IMR-90 (cell line): ENCODE measurements at regions of chr3 and their contacts with region 1.

Region 1: GRCh38 chr3:55897573-55898224 is 410.6 kb upstream of the WNT5A start:
- DNase-seq: peak; percentile 21
- ATAC-seq: peak; percentile 52; the same call in 1 of the 2 replicates
- H3K4me3 ChIP-seq: no peak overlapping the region
- H3K27ac ChIP-seq: no peak overlapping the region
- H3K4me1 ChIP-seq: peaks cover 6% of the 10 kb centered on the region
- H3K27me3 ChIP-seq: peaks cover 11% of the 10 kb centered on the region
- CTCF ChIP-seq: peak; percentile 58
- POLR2A ChIP-seq: no peak
- RAD21 ChIP-seq: peak; percentile 74

Region 2: DNA sequence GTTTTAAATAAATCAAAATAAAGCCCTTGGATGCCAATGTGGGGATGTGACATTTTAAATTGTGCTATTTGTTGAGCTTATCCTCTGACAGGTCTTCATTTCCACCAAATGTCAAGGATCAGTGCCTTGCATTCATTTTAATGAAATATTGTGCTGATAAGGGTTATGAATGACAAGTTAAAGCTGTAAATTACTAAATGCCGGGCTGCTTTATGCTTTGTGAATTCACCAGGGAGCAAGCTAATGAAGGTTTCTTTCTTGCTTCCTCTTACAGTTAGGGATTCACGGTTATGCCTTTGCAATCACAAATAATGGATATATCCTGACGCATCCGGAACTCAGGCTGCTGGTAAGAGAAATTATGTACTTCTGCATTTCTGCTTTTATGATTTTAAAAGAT is 1051.6 kb before region 1 on chr3:
- CTCF ChIA-PET with region 1: no interaction called
- POLR2A ChIA-PET with region 1: no interaction called
- dilution Hi-C with region 1: no loop called
- in situ Hi-C with region 1: loop called (anchors 10 kb)
- intact Hi-C with region 1: no loop called
- DNase-seq: no peak
- ATAC-seq: no peak
- H3K4me3 ChIP-seq: no peak overlapping the region
- H3K27ac ChIP-seq: no peak overlapping the region
- H3K4me1 ChIP-seq: no peaks in the 10 kb centered on the region
- H3K27me3 ChIP-seq: peaks cover 25% of the 10 kb centered on the region
- CTCF ChIP-seq: no peak
- POLR2A ChIP-seq: no peak
- RAD21 ChIP-seq: no peak

Region 3: GRCh38 chr3:54870423-54870822 is 1027.3 kb before region 1 on chr3:
- CTCF ChIA-PET with region 1: no interaction called
- POLR2A ChIA-PET with region 1: no interaction called
- dilution Hi-C with region 1: no loop called
- in situ Hi-C with region 1: no loop called
- intact Hi-C with region 1: loop called (anchors 5 kb)
- DNase-seq: peak; percentile 97
- ATAC-seq: peak; percentile 98
- H3K4me3 ChIP-seq: no peak overlapping the region
- H3K27ac ChIP-seq: peak overlapping the region; percentile 70
- H3K4me1 ChIP-seq: peaks cover 3% of the 10 kb centered on the region
- H3K27me3 ChIP-seq: no peaks in the 10 kb centered on the region
- CTCF ChIP-seq: peak; percentile 88
- POLR2A ChIP-seq: peak; percentile 40; the same call in 1 of the 2 replicates
- RAD21 ChIP-seq: peak; percentile 92

Region 4: DNA sequence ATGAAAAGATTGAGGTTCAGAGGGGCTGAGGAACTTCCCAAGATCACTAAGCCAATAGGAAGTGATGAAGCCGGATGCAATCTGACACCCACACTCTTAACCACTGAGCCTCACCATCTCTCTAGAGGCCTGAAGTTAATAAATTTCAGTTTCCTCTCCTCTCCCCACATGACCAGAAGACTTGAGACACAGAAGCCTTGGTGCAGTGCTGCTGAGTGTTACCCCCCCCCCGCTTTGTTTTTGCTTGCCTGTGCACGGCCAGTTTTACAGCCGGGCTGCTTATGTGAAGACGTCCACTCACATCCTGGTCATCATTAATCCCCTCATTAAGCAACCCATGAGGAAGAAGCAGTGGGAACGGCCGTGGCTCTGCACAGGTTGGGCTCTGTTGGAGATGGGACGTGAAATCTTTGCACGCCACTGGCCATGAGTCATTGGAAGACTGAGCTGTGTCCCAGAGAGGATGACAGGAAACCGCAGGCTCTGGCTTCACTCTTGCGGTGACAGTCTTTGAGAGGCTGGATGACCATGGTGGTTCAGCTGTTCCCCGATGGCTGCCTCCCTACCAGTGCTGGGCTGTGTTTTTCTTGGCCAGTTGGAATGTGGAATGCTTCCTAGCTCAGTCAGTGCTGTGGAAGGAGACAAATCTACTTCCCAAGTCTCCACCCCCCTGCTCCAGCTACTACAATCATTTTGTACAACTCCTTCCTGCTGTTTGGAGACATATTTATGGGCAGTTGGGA is 737.3 kb before region 1 on chr3:
- CTCF ChIA-PET with region 1: no interaction called
- POLR2A ChIA-PET with region 1: no interaction called
- dilution Hi-C with region 1: no loop called
- in situ Hi-C with region 1: no loop called
- intact Hi-C with region 1: loop called (anchors 10 kb)
- DNase-seq: peak; percentile 100
- ATAC-seq: peak; percentile 86
- H3K4me3 ChIP-seq: no peak overlapping the region
- H3K27ac ChIP-seq: peak overlapping the region; percentile 88
- H3K4me1 ChIP-seq: peaks cover 21% of the 10 kb centered on the region
- H3K27me3 ChIP-seq: no peaks in the 10 kb centered on the region
- CTCF ChIP-seq: no peak
- POLR2A ChIP-seq: peak; percentile 45; the same call in 1 of the 2 replicates
- RAD21 ChIP-seq: peak; percentile 36; the same call in 1 of the 2 replicates

Region 5: GRCh38 chr3:55746808-55747413 is 150.8 kb before region 1 on chr3:
- CTCF ChIA-PET with region 1: no interaction called
- POLR2A ChIA-PET with region 1: no interaction called
- dilution Hi-C with region 1: no loop called
- in situ Hi-C with region 1: no loop called
- intact Hi-C with region 1: loop called (anchors 5 kb)
- DNase-seq: peak; percentile 17
- ATAC-seq: no peak
- H3K4me3 ChIP-seq: no peak overlapping the region
- H3K27ac ChIP-seq: no peak overlapping the region
- H3K4me1 ChIP-seq: peaks cover 8% of the 10 kb centered on the region
- H3K27me3 ChIP-seq: no peaks in the 10 kb centered on the region
- CTCF ChIP-seq: peak; percentile 52
- POLR2A ChIP-seq: no peak
- RAD21 ChIP-seq: peak; percentile 47

Region 6: GRCh38 chr3:56251343-56251945 is 353.7 kb after region 1 on chr3:
- CTCF ChIA-PET with region 1: no interaction called
- POLR2A ChIA-PET with region 1: no interaction called
- dilution Hi-C with region 1: no loop called
- in situ Hi-C with region 1: no loop called
- intact Hi-C with region 1: loop called (anchors 5 kb)
- DNase-seq: peak; percentile 51
- ATAC-seq: peak; percentile 79
- H3K4me3 ChIP-seq: no peak overlapping the region
- H3K27ac ChIP-seq: no peak overlapping the region
- H3K4me1 ChIP-seq: no peaks in the 10 kb centered on the region
- H3K27me3 ChIP-seq: peaks cover 2% of the 10 kb centered on the region; the same call in 1 of the 2 replicates
- CTCF ChIP-seq: peak; percentile 79
- POLR2A ChIP-seq: no peak
- RAD21 ChIP-seq: peak; percentile 79